Activated naive CD4-positive, alpha-beta T cell treated with anti-CD3 and anti-CD28 coated beads for 36 hours (primary cell): ENCODE measurements at regions of chr1 and their contacts with region 1.

Region 1: DNA sequence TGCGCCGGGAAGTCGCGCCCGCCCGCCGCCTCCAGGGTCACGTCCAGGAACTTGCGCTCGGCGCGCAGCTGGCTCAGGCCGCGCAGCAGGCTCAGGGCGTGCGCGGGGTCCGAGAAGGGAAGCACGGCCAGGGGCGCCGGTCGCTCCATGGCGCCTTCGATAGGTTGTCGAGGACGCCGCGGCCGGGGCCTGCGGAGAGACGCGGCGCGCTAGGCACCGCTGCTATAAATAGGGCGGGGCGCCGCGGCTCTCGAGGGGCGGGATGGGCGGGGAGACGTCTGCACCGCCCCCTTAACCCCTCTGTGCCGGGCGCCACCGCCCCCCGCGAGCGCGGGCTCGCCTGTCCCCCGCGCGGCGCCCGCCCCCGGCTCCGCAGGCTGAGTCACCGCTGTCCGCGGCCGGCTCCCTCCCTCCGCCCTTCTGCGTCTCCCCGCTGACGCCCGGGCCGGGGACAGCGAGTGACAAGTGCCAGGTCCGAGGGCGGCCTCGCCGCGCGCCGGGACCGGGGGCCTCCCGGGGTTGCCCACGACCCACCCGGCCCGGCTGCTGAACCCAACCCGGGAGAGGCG is at the start of gene KLHL21:
- DNase-seq: peak; percentile 81
- H3K4me3 Mint-ChIP-seq: peak within 1 kb of the TSS; percentile 97
- H3K27ac Mint-ChIP-seq: peak within 1 kb of the TSS; percentile 96
- H3K4me1 Mint-ChIP-seq: peaks cover 35% of the 10 kb centered on the region
- H3K27me3 Mint-ChIP-seq: no peaks in the 10 kb centered on the region
- total RNA-seq, gene KLHL21: 21.0 to 23.3 TPM

Region 2: GRCh38 chr1:6026095-6026809 is 576.5 kb before region 1 on chr1:
- CTCF ChIA-PET with region 1: no interaction called
- intact Hi-C with region 1: loop called (anchors 2 kb)
- DNase-seq: peak; percentile 97
- H3K4me3 Mint-ChIP-seq: peak overlapping the region; percentile 88
- H3K27ac Mint-ChIP-seq: peak overlapping the region; percentile 94
- H3K4me1 Mint-ChIP-seq: peaks cover 47% of the 10 kb centered on the region
- H3K27me3 Mint-ChIP-seq: no peaks in the 10 kb centered on the region

Region 3: DNA sequence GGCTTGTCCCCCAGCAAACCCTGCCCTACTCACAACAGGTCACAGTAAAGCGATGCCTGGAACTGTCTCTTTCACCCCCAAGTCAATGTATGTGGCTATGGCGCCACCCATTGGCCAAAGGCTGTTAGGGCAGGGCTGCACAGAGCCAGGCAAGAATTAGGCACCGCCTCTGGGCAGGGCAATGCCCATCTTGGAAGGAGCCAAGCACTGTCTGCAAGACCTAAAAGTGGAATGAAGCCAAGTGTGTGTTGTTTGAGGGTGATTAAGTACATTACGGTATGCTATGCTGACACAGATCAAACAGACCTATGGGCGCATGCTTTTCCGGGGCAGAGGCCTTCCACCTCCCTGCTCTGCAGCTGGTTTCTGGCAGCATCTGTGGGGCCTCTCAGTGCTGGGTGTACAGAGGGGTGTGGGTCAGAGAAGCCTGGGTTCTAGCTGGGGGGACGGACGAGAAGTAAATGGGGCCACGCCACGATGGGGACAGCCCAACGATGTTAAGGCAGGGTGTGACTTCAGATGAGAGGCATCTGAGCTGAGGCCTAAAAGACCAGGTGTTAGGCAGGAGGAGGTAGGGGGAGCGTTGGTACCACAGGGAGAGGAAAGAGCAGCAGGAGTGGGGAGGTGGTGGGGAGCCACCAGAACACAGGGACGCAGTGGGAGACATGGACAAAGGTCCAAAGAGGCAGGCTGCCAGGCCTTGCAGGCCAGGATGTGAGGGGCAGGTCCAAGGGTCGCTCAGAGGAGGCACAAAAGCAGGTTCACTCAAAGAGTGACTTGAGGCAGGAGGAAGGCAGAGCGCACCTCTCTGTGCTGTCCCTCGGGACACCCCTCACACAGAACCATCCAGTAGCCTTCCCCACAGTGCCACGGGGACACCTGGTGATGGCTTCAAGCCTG is 259.0 kb before region 1 on chr1:
- CTCF ChIA-PET with region 1: no interaction called
- intact Hi-C with region 1: no loop called
- DNase-seq: peak; percentile 76
- H3K4me3 Mint-ChIP-seq: no peak overlapping the region
- H3K27ac Mint-ChIP-seq: no peak overlapping the region
- H3K4me1 Mint-ChIP-seq: peaks cover 10% of the 10 kb centered on the region
- H3K27me3 Mint-ChIP-seq: no peaks in the 10 kb centered on the region

Region 4: GRCh38 chr1:6464514-6464836 is 138.3 kb before region 1 on chr1:
- CTCF ChIA-PET with region 1: no interaction called
- intact Hi-C with region 1: loop called (anchors 1 kb)
- DNase-seq: peak; percentile 85
- H3K4me3 Mint-ChIP-seq: peak overlapping the region; percentile 92
- H3K27ac Mint-ChIP-seq: peak overlapping the region; percentile 87
- H3K4me1 Mint-ChIP-seq: peaks cover 51% of the 10 kb centered on the region
- H3K27me3 Mint-ChIP-seq: no peaks in the 10 kb centered on the region

Region 5: GRCh38 chr1:6579374-6580118 is 23.2 kb before region 1 on chr1 and contains the start of gene ZBTB48:
- CTCF ChIA-PET with region 1: interaction called, 4 read pairs
- intact Hi-C with region 1: loop called (anchors 1 kb)
- DNase-seq: peak; percentile 98
- H3K4me3 Mint-ChIP-seq: peak within 1 kb of the TSS; percentile 97
- H3K27ac Mint-ChIP-seq: peak within 1 kb of the TSS; percentile 94
- H3K4me1 Mint-ChIP-seq: peaks cover 34% of the 10 kb centered on the region
- H3K27me3 Mint-ChIP-seq: no peaks in the 10 kb centered on the region
- total RNA-seq, gene ZBTB48: 15.0 to 18.3 TPM

Region 6: GRCh38 chr1:6657138-6657537 is 54.4 kb after region 1 on chr1:
- CTCF ChIA-PET with region 1: no interaction called
- intact Hi-C with region 1: no loop called
- DNase-seq: no peak
- H3K4me3 Mint-ChIP-seq: no peak overlapping the region
- H3K27ac Mint-ChIP-seq: no peak overlapping the region
- H3K4me1 Mint-ChIP-seq: peaks cover 5% of the 10 kb centered on the region
- H3K27me3 Mint-ChIP-seq: no peaks in the 10 kb centered on the region

Region 7: GRCh38 chr1:6701437-6702153 is 98.8 kb after region 1 on chr1 and contains the start of gene DNAJC11:
- CTCF ChIA-PET with region 1: interaction called, 3 read pairs
- intact Hi-C with region 1: loop called (anchors 5 kb)
- DNase-seq: peak; percentile 91
- H3K4me3 Mint-ChIP-seq: peak within 1 kb of the TSS; percentile 88
- H3K27ac Mint-ChIP-seq: peak within 1 kb of the TSS; percentile 86
- H3K4me1 Mint-ChIP-seq: peaks cover 31% of the 10 kb centered on the region
- H3K27me3 Mint-ChIP-seq: no peaks in the 10 kb centered on the region
- total RNA-seq, gene DNAJC11: 31.6 to 32.5 TPM

Region 8: GRCh38 chr1:7745791-7746190 is 1143.0 kb after region 1 on chr1:
- CTCF ChIA-PET with region 1: no interaction called
- intact Hi-C with region 1: no loop called
- DNase-seq: no peak
- H3K4me3 Mint-ChIP-seq: no peak overlapping the region
- H3K27ac Mint-ChIP-seq: no peak overlapping the region
- H3K4me1 Mint-ChIP-seq: no peaks in the 10 kb centered on the region
- H3K27me3 Mint-ChIP-seq: no peaks in the 10 kb centered on the region